ENCODE measurements at regions of chr16 and their contacts with region 1.

Region 1: DNA sequence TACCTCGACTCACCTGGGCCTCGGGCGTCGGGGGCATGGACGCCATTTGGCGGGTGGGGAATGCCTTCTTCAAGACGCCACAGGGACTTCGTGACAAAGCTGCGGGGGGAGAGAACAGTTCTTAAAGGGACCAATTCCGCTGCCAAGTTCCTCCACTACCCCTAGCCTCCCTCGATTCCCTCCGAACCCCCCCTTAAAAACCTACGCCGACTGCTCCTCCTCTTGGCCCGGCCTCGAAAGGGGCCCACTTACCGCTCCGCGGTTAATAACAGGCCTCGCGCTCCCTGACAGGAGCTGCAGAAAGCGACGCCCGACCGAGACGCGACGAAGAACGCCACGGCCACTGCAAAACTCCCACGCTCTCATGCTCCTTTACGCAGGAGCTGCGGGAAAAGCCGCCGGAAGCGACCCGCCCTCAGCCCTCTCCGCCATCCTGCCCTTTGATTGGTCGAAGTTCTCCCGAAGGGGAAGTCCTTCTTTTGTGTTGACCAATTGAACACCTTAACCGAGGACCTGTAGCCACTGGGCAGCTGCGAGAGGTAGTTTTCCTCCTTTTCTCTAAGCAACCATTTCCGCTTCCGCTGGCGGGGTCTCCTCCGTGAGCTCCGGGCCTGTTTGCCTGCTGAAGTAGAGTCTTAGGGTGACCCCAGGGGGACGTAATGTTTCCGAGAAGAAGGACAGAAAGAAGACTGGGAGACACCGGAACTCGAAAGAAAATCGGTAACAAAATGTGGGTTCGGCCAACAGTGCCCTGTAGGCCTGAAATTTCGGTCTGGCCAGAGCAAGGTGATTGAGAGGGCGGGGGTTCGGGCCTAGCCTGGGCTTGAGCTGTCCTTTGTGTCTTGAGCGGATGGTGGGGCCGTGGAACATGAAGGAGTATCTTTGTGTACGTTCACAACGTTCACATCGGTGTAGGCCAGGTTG is at the starts of genes NAA60 and ZNF597:
- DNase-seq: peak; percentile 52
- ATAC-seq: peak; percentile 96
- H3K4me3 Mint-ChIP-seq: peak within 1 kb of the TSS; percentile 98
- H3K27ac Mint-ChIP-seq: peak within 1 kb of the TSS; percentile 95
- H3K4me1 Mint-ChIP-seq: peaks cover 20% of the 10 kb centered on the region
- H3K27me3 Mint-ChIP-seq: peaks cover 2% of the 10 kb centered on the region
- CTCF ChIP-seq: no peak
- total RNA-seq, gene NAA60: 44.1 and 48.0 TPM in 2 replicates
- total RNA-seq, gene ZNF597: 3.6 and 4.2 TPM in 2 replicates

Region 2: GRCh38 chr16:3364774-3365427 is 78.5 kb before region 1 on chr16:
- CTCF ChIA-PET with region 1: no interaction called
- POLR2A ChIA-PET with region 1: interaction called, 7 read pairs
- intact Hi-C with region 1: loop called (anchors 1 kb)
- DNase-seq: peak; percentile 65
- ATAC-seq: peak; percentile 95
- H3K4me3 Mint-ChIP-seq: peak overlapping the region; percentile 82
- H3K27ac Mint-ChIP-seq: peak overlapping the region; percentile 84
- H3K4me1 Mint-ChIP-seq: peaks cover 12% of the 10 kb centered on the region
- H3K27me3 Mint-ChIP-seq: peaks cover 9% of the 10 kb centered on the region
- CTCF ChIP-seq: no peak

Region 3: DNA sequence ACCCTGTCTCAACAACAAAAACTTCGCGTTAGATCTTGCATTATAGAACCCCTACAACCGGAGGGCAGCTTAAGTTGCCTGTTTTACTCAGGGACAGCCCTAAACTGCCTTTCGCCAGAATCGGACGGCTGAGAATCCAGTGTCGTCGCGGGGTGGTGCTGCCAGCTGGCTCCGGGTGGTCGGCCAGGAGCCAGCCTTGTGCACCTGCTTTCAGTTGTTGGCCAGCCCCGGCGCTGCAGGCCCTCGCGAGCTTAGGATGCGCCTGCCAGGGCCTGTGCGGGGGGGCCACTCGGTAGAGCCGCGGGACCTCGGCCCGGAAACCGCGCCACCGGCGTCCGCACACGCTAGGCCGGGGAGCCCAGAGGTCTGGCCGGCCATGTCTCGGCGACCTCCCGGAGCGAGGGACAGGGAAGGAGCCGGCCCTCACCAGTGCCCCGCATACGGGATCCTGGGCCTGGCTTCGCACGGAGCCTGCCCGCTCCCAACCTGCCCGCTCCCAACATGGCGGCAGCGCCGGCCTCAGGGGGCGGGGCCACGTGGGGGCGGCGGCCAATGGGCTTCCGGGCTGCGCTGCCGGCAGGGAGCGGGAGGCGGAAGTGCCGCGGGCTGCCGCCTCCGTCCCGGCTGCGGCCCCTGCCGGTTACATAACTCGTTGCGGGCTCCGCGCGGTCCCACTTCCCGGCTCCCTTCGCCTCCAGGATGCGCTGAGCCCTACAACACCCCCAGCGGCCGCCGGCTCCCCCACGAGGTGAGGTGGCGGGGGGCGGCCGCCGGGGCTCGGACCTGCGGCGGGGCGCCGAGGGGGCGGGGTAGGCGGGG is 14.3 kb after region 1 on chr16:
- CTCF ChIA-PET with region 1: no interaction called
- POLR2A ChIA-PET with region 1: interaction called, 19 read pairs
- intact Hi-C with region 1: loop called (anchors 1 kb)
- DNase-seq: peak; percentile 91
- ATAC-seq: peak; percentile 90
- H3K4me3 Mint-ChIP-seq: peak overlapping the region; percentile 82
- H3K27ac Mint-ChIP-seq: peak overlapping the region; percentile 85
- H3K4me1 Mint-ChIP-seq: peaks cover 44% of the 10 kb centered on the region
- H3K27me3 Mint-ChIP-seq: no peaks in the 10 kb centered on the region
- CTCF ChIP-seq: no peak

Region 4: GRCh38 chr16:3472878-3473595 is 29.7 kb after region 1 on chr16:
- CTCF ChIA-PET with region 1: no interaction called
- POLR2A ChIA-PET with region 1: no interaction called
- intact Hi-C with region 1: no loop called
- DNase-seq: no peak
- ATAC-seq: no peak
- H3K4me3 Mint-ChIP-seq: no peak overlapping the region
- H3K27ac Mint-ChIP-seq: no peak overlapping the region
- H3K4me1 Mint-ChIP-seq: peaks cover 13% of the 10 kb centered on the region
- H3K27me3 Mint-ChIP-seq: no peaks in the 10 kb centered on the region
- CTCF ChIP-seq: no peak

Measured in activated B cell treated with CpG ODN at 0.5 μM for 24 hours (primary cell).